Caco-2 (cell line): ENCODE measurements at regions of chr1 and their contacts with region 1.

Region 1: GRCh38 chr1:200296091-200296661 is 113.7 kb downstream of the ZNF281 start:
- DNase-seq: peak; percentile 51 to 61
- H3K4me3 ChIP-seq: no peak overlapping the region
- H3K4me3 Mint-ChIP-seq: peak overlapping the region; percentile 20
- H3K27ac Mint-ChIP-seq: peak overlapping the region; percentile 64
- H3K4me1 ChIP-seq: peaks cover 34% of the 10 kb centered on the region
- H3K4me1 Mint-ChIP-seq: peaks cover 31% of the 10 kb centered on the region
- H3K27me3 ChIP-seq: no peaks in the 10 kb centered on the region
- H3K27me3 Mint-ChIP-seq: no peaks in the 10 kb centered on the region
- CTCF ChIP-seq: no peak

Region 2: GRCh38 chr1:200336111-200336845 is 40.1 kb after region 1 on chr1:
- CTCF ChIA-PET with region 1: no interaction called
- POLR2A ChIA-PET with region 1: no interaction called
- intact Hi-C with region 1: loop called (anchors 1 kb)
- DNase-seq: peak in 1 of 2 experiments; percentile 22
- H3K4me3 ChIP-seq: no peak overlapping the region
- H3K4me3 Mint-ChIP-seq: peak overlapping the region; percentile 38
- H3K27ac Mint-ChIP-seq: peak overlapping the region; percentile 83
- H3K4me1 ChIP-seq: peaks cover 44% of the 10 kb centered on the region
- H3K4me1 Mint-ChIP-seq: peaks cover 35% of the 10 kb centered on the region
- H3K27me3 ChIP-seq: no peaks in the 10 kb centered on the region
- H3K27me3 Mint-ChIP-seq: no peaks in the 10 kb centered on the region
- CTCF ChIP-seq: no peak